ENCODE measurements at regions of chr5 and their contacts with region 1.

Region 1: DNA sequence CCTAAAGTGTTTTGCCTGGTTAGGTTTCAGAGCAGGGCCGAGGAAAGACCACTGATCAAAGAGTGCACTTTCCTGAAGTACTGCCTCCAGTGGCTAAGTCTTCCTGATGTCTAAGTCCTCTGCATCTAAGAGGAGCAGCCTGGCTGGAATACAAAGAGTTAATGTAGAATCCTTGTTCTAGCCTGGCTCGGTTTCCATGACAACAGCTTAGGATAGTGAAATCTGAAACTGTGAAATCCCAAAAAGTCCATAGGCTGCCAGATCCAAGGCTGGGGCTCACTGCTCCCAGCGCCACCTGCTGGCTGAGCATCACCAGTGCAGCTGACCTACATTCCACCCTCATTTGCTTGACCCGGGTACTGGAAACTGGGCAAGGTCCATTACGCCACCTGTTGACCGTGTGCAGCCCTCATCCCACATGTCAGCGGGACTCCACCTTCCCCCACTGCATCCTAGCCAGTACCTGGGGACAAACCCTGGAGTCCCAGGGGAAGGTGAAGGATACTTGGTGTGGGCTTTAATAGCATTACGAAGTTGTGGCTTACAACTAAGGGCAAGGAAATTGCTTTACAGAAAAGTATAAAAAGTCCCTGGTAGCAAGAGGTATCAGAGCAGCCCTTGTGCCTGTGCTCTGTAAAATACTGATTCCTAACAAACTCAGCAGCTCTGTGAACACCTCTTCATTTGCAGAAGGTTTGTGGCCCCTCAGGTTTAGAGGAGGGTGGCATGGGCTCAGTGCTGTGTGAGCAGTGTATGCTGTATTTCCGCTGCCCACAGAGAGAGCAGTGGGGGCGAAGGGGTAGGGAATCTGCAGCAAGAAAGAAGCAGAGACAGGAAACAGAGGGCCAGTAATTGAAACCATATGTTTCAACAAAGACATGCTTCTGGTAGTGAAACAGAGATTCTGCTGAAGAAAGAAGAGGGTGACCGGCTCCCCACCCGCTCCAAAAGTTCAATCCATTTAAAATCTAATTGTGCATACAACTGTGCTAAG is 36.0 kb downstream of the PCDHGC5 start:
- DNase-seq: peak; percentile 50
- ATAC-seq: peak; percentile 88
- H3K4me3 Mint-ChIP-seq: no peak overlapping the region
- H3K27ac Mint-ChIP-seq: no peak overlapping the region
- H3K4me1 Mint-ChIP-seq: peaks cover 26% of the 10 kb centered on the region
- H3K27me3 Mint-ChIP-seq: no peaks in the 10 kb centered on the region
- CTCF ChIP-seq: peak; percentile 98

Region 2: DNA sequence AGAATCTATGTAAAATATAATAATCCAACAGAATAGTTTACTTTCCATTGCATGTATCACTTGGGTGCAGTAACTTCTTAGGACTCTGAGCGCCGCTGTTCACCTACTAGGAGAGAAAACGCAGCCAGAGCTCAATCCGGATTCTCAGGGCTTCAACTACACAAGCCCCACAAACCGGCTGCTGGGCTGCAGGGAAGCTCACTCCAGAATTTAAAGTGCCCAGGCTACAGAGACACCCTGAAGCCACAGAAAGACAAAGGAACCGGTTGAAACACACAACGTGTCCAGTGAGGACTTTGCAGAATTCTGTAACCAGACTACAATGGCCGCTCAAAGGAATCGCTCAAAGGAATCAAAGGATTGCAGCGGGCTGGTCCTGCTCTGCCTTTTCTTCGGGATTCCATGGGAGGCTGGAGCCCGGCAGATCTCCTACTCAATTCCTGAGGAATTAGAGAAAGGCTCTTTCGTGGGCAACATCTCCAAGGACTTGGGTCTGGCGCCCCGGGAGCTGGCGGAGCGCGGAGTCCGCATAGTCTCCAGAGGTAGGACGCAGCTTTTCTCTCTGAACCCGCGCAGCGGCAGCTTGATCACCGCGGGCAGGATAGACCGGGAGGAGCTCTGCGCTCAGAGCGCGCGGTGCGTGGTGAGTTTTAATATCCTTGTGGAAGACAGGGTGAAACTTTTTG is 111.9 kb before region 1 on chr5 and contains the start of gene PCDHGA10:
- CTCF ChIA-PET with region 1: interaction called, 15 read pairs
- POLR2A ChIA-PET with region 1: no interaction called
- intact Hi-C with region 1: loop called (anchors 1 kb)
- DNase-seq: no peak
- ATAC-seq: peak; percentile 66
- H3K4me3 Mint-ChIP-seq: peak within 1 kb of the TSS; percentile 86
- H3K27ac Mint-ChIP-seq: peak within 1 kb of the TSS; percentile 41
- H3K4me1 Mint-ChIP-seq: peaks cover 21% of the 10 kb centered on the region
- H3K27me3 Mint-ChIP-seq: peaks cover 52% of the 10 kb centered on the region
- CTCF ChIP-seq: no peak
- total RNA-seq, gene PCDHGA10: 1.2 and 1.3 TPM in 2 replicates

Region 3: DNA sequence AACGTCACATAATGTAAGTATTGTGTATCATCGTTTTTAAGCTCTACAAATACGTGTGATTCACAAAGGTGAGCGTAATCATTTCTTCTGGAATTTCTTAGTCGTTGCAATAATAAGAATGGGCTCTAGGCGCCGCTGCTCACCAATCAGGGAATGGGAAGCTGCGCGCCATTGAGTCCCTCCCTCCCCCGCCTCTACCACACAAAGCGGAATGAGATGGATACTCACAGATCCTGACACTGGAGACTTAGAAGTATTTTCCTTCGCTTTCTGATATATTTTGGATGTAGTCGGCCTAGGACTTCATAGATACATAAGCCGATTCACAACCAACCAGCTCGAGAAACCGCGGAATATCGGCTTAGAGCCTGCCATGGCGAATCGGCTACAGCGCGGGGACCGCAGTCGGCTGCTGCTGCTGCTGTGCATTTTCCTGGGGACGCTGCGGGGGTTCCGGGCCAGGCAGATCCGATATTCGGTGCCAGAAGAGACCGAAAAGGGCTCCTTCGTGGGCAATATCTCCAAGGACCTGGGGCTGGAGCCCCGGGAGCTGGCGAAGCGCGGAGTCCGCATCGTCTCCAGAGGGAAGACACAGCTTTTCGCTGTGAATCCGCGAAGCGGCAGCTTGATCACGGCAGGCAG is 103.9 kb before region 1 on chr5 and contains the start of gene PCDHGA11:
- CTCF ChIA-PET with region 1: interaction called, 40 read pairs
- POLR2A ChIA-PET with region 1: no interaction called
- intact Hi-C with region 1: loop called (anchors 1 kb)
- DNase-seq: no peak
- ATAC-seq: peak; percentile 69
- H3K4me3 Mint-ChIP-seq: peak within 1 kb of the TSS; percentile 85
- H3K27ac Mint-ChIP-seq: no peak within 1 kb of the TSS
- H3K4me1 Mint-ChIP-seq: peaks cover 9% of the 10 kb centered on the region
- H3K27me3 Mint-ChIP-seq: peaks cover 50% of the 10 kb centered on the region
- CTCF ChIP-seq: no peak
- total RNA-seq, gene PCDHGA11: 0.73 and 1.1 TPM in 2 replicates

Region 4: DNA sequence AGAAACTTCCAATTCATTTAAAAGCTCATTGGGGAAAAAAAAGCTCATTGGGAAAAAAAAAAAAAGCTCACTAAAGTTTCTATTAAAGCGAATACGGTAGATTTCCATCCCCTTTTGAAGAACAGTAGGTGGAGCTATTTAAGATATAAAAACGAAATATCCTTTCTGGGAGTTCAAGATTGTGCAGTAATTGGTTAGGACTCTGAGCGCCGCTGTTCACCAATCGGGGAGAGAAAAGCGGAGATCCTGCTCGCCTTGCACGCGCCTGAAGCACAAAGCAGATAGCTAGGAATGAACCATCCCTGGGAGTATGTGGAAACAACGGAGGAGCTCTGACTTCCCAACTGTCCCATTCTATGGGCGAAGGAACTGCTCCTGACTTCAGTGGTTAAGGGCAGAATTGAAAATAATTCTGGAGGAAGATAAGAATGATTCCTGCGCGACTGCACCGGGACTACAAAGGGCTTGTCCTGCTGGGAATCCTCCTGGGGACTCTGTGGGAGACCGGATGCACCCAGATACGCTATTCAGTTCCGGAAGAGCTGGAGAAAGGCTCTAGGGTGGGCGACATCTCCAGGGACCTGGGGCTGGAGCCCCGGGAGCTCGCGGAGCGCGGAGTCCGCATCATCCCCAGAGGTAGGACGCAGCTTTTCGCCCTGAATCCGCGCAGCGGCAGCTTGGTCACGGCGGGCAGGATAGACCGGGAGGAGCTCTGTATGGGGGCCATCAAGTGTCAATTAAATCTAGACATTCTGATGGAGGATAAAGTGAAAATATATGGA is 94.4 kb before region 1 on chr5 and contains the start of gene PCDHGA12:
- CTCF ChIA-PET with region 1: interaction called, 58 read pairs
- POLR2A ChIA-PET with region 1: no interaction called
- intact Hi-C with region 1: loop called (anchors 1 kb)
- DNase-seq: no peak
- ATAC-seq: peak; percentile 86
- H3K4me3 Mint-ChIP-seq: peak within 1 kb of the TSS; percentile 80
- H3K27ac Mint-ChIP-seq: peak within 1 kb of the TSS; percentile 76
- H3K4me1 Mint-ChIP-seq: peaks cover 16% of the 10 kb centered on the region
- H3K27me3 Mint-ChIP-seq: peaks cover 46% of the 10 kb centered on the region
- CTCF ChIP-seq: no peak
- total RNA-seq, gene PCDHGA12: 1.3 and 1.6 TPM in 2 replicates

Region 5: GRCh38 chr5:141475625-141476131 is 49.2 kb before region 1 on chr5 and contains the start of gene PCDHGC3:
- CTCF ChIA-PET with region 1: interaction called, 59 read pairs
- POLR2A ChIA-PET with region 1: interaction called, 4 read pairs
- intact Hi-C with region 1: loop called (anchors 1 kb)
- DNase-seq: no peak
- ATAC-seq: peak; percentile 96
- H3K4me3 Mint-ChIP-seq: peak within 1 kb of the TSS; percentile 93
- H3K27ac Mint-ChIP-seq: peak within 1 kb of the TSS; percentile 32
- H3K4me1 Mint-ChIP-seq: peaks cover 28% of the 10 kb centered on the region
- H3K27me3 Mint-ChIP-seq: peaks cover 32% of the 10 kb centered on the region
- CTCF ChIP-seq: no peak
- total RNA-seq, gene PCDHGC3: 2.6 and 3.3 TPM in 2 replicates

Region 6: DNA sequence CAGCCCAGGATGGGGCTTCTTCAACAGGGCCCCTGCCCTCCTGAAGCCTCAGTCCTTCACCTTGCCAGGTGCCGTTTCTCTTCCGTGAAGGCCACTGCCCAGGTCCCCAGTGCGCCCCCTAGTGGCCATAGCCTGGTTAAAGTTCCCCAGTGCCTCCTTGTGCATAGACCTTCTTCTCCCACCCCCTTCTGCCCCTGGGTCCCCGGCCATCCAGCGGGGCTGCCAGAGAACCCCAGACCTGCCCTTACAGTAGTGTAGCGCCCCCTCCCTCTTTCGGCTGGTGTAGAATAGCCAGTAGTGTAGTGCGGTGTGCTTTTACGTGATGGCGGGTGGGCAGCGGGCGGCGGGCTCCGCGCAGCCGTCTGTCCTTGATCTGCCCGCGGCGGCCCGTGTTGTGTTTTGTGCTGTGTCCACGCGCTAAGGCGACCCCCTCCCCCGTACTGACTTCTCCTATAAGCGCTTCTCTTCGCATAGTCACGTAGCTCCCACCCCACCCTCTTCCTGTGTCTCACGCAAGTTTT is 12.5 kb before region 1 on chr5:
- CTCF ChIA-PET with region 1: interaction called, 44 read pairs
- POLR2A ChIA-PET with region 1: interaction called, 3 read pairs
- intact Hi-C with region 1: loop called (anchors 1 kb)
- DNase-seq: peak; percentile 66
- ATAC-seq: no peak
- H3K4me3 Mint-ChIP-seq: peak overlapping the region; percentile 85
- H3K27ac Mint-ChIP-seq: peak overlapping the region; percentile 20
- H3K4me1 Mint-ChIP-seq: peaks cover 84% of the 10 kb centered on the region
- H3K27me3 Mint-ChIP-seq: no peaks in the 10 kb centered on the region
- CTCF ChIP-seq: peak; percentile 37

Region 7: DNA sequence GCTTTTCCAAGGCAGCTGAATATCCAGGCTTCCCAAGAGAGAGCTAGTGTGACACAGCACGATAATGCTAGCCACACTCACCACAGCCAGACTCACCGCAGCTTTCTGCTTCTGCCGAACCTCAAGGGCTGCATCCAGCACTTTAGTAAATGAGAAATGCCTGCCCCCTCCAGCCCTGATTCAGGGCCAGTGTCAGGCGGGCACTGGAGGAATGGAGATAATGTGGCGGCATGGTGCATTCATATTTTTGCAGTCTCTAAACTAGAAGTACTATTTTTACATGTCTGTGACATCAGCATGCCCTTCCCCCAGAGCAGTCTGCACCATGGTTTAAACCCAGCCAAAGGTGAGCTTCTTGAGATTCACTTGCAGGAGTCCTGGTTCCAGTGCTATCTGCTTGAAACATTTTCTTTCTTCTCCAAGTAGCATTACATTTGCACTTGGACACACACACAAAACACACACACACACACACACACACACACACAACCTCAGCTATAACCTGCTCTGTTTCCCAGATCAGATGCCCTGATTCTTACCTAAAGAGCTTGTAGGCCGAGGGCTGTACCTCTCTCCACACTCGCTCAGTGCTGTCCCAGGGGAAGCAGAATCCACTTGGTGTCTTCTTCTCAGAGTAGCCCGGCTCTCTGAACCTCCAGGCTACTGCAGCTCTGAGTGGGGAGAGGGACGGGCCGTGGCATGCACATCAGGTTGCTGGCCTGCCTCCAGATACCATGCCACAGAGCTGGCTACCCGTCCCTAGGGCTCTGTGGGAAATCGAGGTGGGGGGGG is 1160.7 kb after region 1 on chr5 and contains the start of gene FGF1:
- CTCF ChIA-PET with region 1: no interaction called
- POLR2A ChIA-PET with region 1: no interaction called
- intact Hi-C with region 1: no loop called
- DNase-seq: no peak
- ATAC-seq: no peak
- H3K4me3 Mint-ChIP-seq: no peak within 1 kb of the TSS
- H3K27ac Mint-ChIP-seq: no peak within 1 kb of the TSS
- H3K4me1 Mint-ChIP-seq: no peaks in the 10 kb centered on the region
- H3K27me3 Mint-ChIP-seq: peaks cover 4% of the 10 kb centered on the region
- CTCF ChIP-seq: no peak
- total RNA-seq, gene FGF1: not detected in 2 replicates

Measured in activated B cell treated with CpG ODN at 0.5 μM for 24 hours (primary cell).